Activated naive CD4-positive, alpha-beta T cell treated with anti-CD3 and anti-CD28 coated beads for 36 hours (primary cell): ENCODE measurements at regions of chr1 and their contacts with region 1.

Region 1: DNA sequence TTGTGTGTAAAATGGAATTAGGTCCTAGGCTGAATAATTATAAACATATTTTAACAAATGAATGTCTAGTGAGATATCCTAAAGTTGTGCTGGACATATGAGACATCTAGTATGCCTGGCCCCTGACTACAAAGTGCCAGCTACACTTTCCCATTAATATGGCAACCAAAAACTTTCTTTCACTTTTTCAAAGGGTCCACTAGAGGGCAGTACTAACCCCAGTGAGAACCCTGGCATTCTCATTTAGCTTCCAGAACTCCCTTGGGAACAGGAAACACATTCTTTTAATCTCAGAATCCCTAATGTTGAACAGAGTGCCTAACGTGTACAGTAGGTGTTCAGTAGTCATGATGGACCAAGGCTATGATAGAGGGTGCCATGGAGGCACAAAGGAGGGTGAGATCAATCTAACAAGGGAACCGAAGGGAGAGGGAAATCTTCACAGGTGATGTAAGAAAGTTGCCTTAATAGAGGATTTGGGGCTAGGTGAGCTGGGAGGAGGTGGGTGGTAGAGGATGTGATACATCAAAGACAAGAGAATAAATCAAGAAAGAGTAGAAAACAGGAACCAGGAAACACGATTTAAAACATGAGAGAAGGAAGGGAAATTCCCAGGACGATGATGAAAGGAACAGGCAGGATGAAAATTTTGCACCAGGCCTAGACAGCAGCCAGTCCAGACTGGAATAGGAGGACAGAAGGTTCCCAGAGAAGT is 41.6 kb downstream of the NSL1 start:
- DNase-seq: peak; percentile 22
- H3K4me3 Mint-ChIP-seq: no peak overlapping the region
- H3K27ac Mint-ChIP-seq: peak overlapping the region; percentile 32
- H3K4me1 Mint-ChIP-seq: peaks cover 54% of the 10 kb centered on the region
- H3K27me3 Mint-ChIP-seq: no peaks in the 10 kb centered on the region

Region 2: DNA sequence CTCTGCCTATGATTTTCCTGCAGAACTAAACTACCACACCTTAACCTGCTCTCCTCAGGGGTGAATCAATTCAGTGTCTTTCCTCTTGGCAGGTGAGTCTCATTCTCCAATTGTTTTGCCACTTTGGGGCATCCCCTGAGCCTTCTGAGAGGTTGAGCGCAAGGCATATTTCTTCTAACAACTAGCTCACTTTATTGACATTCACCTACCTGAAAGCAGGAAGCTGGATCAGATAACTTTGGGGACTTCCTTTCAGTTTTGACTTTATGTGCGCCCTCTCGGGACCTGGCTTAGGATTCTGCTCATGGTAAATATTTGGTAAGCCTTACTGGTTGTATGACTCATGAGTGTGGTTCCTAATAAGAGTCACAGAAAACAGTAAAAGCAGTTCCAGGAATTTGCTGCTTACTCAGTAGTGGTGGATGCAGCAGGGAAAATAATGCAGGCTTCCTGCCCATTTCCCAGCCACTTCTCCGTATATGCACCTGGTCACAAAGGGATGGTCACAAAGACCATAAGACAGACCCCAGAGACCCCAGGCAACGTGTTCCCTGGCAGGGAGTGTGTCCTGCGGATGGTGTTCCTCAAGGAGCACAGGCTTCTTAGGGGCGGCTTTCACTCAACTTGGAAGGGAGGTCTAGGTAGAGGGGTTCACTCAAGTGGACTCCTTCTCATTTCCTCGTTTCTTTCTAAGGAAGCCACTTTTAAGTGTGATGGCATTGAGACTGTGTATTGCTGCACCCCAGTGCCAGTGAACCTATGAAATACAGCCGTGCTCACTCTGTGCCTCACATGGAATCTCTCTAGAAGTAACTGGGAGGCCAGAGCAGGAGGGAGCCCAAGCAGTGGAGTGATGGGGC is 28.4 kb before region 1 on chr1:
- CTCF ChIA-PET with region 1: interaction called, 7 read pairs
- intact Hi-C with region 1: loop called (anchors 1 kb)
- DNase-seq: peak; percentile 71
- H3K4me3 Mint-ChIP-seq: no peak overlapping the region
- H3K27ac Mint-ChIP-seq: no peak overlapping the region
- H3K4me1 Mint-ChIP-seq: peaks cover 20% of the 10 kb centered on the region
- H3K27me3 Mint-ChIP-seq: no peaks in the 10 kb centered on the region

Region 3: DNA sequence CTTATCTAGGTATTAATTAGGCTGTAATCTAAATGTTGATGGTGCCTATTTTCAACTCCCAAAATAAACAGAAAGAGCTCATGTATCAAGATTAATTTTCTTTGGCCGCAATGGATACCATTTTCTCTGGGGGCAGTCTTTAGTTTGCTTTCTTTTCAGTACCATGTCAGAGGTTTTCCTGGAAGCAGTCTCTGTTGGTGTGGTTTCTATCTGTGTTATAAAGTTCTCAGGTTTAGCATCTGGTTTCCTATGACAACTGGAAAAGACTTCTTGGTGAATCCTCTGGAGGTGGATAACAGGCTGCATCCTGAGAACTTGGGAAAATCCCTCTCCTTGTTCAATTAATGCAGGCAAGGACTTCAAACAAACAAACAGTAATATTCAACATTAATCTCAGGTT is 11.6 kb before region 1 on chr1:
- CTCF ChIA-PET with region 1: interaction called, 44 read pairs
- intact Hi-C with region 1: loop called (anchors 1 kb)
- DNase-seq: no peak
- H3K4me3 Mint-ChIP-seq: no peak overlapping the region
- H3K27ac Mint-ChIP-seq: peak overlapping the region; percentile 47
- H3K4me1 Mint-ChIP-seq: peaks cover 30% of the 10 kb centered on the region
- H3K27me3 Mint-ChIP-seq: no peaks in the 10 kb centered on the region

Region 4: GRCh38 chr1:212760126-212760823 is 10.3 kb after region 1 on chr1:
- CTCF ChIA-PET with region 1: interaction called, 12 read pairs
- intact Hi-C with region 1: no loop called
- DNase-seq: peak; percentile 75
- H3K4me3 Mint-ChIP-seq: no peak overlapping the region
- H3K27ac Mint-ChIP-seq: no peak overlapping the region
- H3K4me1 Mint-ChIP-seq: peaks cover 13% of the 10 kb centered on the region
- H3K27me3 Mint-ChIP-seq: no peaks in the 10 kb centered on the region

Region 5: GRCh38 chr1:212769459-212770167 is 19.6 kb after region 1 on chr1:
- CTCF ChIA-PET with region 1: interaction called, 9 read pairs
- intact Hi-C with region 1: loop called (anchors 1 kb)
- DNase-seq: no peak
- H3K4me3 Mint-ChIP-seq: no peak overlapping the region
- H3K27ac Mint-ChIP-seq: peak overlapping the region; percentile 48
- H3K4me1 Mint-ChIP-seq: peaks cover 42% of the 10 kb centered on the region
- H3K27me3 Mint-ChIP-seq: no peaks in the 10 kb centered on the region

Region 6: DNA sequence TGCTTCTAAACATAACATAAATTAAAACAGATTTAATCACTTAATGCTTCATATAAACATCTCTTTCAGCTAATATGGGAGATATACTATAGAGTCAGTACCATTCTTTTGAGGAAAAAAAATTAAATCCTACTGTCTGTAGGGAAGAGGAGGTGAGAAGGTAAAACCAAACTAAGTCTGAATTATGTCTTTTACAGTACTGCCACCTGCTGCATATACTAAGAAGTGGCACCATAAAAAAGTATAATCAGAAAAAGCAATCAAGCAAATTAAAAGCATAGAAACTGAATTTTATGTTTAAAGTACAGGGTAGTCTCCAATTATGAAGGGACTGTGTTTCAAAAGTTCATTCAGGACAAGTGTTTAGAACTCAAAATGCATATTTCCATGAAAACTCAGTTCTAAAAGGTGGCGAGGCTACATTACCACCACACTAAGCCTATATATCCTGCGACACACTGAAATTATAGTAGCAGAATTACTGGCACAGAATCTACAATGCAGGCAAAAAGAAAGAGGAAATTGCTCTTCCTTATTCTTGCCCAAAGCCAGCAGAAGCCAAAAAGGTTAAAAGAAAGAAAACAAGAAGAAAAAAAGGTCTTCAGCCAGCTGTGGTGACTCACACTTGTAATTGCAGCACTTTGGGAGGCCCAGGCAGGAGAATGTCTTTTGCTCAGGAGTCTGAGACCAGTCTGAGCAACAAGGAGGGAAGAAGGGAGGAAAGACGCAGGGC is 32.6 kb after region 1 on chr1:
- CTCF ChIA-PET with region 1: interaction called, 12 read pairs
- intact Hi-C with region 1: loop called (anchors 1 kb)
- DNase-seq: peak; percentile 13
- H3K4me3 Mint-ChIP-seq: no peak overlapping the region
- H3K27ac Mint-ChIP-seq: no peak overlapping the region
- H3K4me1 Mint-ChIP-seq: peaks cover 13% of the 10 kb centered on the region
- H3K27me3 Mint-ChIP-seq: no peaks in the 10 kb centered on the region

Region 7: DNA sequence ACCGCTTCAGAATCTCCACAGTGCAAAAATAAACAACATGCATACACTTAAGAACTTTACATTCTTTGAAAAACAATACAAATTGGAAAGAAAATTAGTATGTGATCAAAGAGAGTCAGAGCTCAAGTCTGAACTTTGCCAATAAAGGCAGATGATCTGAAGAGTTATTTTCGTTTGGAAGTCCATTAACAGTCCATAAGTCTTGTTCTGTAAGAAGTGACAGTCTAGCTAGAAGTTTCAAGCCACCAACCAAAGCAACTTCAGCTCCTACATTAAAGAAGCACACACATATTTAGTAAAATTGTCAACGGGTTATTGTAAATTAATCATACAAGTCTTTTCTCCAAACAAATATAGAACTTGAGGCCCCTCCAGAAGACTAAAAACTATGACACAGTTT is 244.9 kb after region 1 on chr1:
- CTCF ChIA-PET with region 1: no interaction called
- intact Hi-C with region 1: loop called (anchors 1 kb)
- DNase-seq: no peak
- H3K4me3 Mint-ChIP-seq: no peak overlapping the region
- H3K27ac Mint-ChIP-seq: no peak overlapping the region
- H3K4me1 Mint-ChIP-seq: peaks cover 4% of the 10 kb centered on the region
- H3K27me3 Mint-ChIP-seq: no peaks in the 10 kb centered on the region